ENCODE measurements at regions of chr12 and their contacts with region 1.

Region 1: DNA sequence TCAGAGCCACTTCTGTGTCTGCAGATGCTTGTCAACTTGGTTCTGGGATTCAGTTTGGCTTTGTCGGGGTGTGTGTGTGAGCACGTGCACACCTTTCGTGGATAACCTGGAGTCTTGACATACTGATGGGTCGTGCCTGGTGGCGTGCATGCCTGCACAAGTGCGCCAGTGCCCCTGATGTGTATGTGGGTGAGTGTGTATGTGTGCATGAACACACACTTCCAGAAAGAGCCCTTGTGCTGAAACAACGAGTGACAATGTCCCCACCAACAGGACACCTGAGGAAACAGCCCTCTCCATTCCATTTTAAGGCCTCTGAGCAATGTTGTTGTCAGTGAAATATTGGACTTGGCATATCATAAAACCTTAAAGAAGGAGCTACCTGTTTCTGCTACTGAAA is 53.9 kb downstream of the SMUG1 start:
- DNase-seq: peak; percentile 63

Region 2: DNA sequence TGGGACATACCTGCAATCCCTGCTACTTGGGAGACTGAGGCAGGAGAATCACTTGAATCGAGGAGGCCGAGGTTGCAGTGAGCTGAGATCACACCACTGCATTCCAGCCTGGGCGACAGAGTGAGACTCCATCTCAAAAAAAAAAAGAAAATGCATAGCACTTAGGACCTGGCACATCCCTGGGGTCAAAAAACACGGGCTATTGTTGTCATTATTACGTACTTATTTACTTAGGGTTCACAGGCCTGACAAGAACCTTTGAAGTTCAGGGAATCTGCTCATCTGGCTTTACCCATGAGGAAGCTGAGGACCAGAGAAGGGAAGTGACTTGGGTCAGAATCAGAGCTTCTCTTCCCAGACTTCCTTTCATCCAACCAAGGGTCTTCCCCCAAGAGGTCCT is 18.7 kb after region 1 on chr12:
- intact Hi-C with region 1: loop called in 1 of 2 experiments (anchors 1 kb)
- DNase-seq: no peak

Region 3: GRCh38 chr12:54214553-54215406 is 79.9 kb after region 1 on chr12:
- intact Hi-C with region 1: no loop called
- DNase-seq: peak; percentile 96